AG04450 (cell line): ENCODE measurements at regions of chr10 and their contacts with region 1.

Region 1: DNA sequence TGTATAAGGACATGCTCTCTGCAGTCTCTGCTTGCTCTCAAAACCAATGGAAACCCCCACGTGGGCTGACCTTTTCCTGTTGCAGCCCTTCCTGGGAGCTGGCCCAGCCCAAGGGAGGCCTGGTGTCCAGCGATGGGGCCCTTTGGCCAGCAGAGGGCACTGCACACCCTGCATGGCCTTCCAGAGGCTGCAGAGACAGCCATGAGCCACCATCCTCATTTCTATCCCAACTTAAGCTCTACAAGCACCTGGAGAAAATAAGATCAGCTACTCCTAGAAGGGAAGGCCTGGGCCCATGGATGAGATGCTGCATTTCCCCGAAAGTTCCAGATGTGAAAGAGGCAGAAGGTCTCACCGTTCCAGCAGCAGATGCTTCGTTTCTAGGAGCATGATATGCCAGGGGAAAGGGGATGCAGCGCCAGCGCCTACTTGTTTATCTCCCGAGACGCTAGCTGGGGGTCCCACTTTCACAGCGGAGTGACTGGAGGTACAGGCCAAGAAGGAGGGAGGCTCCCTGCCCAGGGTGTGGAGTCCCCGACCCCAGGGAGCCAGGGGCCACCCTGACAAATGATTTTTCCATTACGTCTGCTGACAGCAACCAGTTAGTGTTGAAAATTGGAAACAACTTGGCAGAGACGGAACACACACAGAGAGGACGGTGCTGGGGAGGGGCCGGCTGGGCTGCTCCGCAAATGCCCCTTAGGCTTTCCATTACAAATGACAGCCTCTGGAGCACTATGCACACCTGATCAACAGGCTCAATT is 106.4 kb downstream of the ZRANB1 start:
- DNase-seq: peak; percentile 76
- H3K4me3 ChIP-seq: no peak overlapping the region
- H3K27ac ChIP-seq: peak overlapping the region; percentile 52
- H3K27me3 ChIP-seq: no peaks in the 10 kb centered on the region
- CTCF ChIP-seq: peak; percentile 99

Region 2: DNA sequence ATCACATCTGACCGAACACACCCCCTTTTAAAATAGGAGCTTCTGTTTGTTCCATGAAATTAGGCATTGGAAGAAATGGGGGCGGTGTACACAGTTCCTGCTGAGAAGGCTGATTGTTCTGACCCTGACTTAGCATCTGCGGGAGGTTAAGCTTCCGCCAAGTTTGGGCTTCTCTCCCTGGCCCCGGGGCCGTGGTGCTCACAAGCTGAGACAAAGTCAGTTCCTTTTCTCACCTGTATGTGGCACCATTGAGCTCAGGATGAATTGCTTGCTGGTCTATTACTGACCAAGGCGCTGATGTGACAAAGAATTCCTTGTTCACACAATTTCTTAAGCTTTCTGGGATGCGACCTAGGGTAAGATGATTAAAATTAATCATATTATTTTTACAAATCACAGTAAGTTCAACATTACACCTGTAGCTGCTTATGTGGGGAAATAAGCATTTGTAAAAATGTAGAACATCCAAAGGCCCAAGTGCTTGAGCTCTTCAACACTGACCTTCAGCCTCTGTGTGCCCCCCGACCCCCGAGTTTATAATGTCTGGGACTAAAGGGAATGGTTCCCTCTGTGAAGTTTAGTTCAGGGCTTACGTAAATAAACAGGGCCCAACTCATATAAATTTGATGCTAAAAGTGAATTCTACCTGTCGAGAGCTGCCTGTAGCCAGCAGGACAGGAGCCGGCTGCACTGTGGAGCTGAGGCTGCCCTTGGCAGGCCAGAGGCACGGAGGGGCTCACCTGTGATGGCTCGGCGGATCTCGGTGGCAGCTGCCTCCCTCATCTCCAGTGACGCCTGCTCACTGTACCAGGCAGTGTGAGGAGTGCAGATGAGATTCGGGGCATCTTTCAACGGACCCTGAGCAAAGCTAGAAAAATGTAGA is 55.6 kb before region 1 on chr10:
- CTCF ChIA-PET with region 1: interaction called, 12 read pairs
- POLR2A ChIA-PET with region 1: no interaction called
- DNase-seq: peak; percentile 15
- H3K4me3 ChIP-seq: no peak overlapping the region
- H3K27ac ChIP-seq: no peak overlapping the region
- H3K27me3 ChIP-seq: no peaks in the 10 kb centered on the region
- CTCF ChIP-seq: peak; percentile 62

Region 3: GRCh38 chr10:125006921-125007426 is 41.3 kb before region 1 on chr10:
- CTCF ChIA-PET with region 1: interaction called, 28 read pairs
- POLR2A ChIA-PET with region 1: no interaction called
- DNase-seq: no peak
- H3K4me3 ChIP-seq: no peak overlapping the region
- H3K27ac ChIP-seq: no peak overlapping the region
- H3K27me3 ChIP-seq: no peaks in the 10 kb centered on the region
- CTCF ChIP-seq: no peak

Region 4: GRCh38 chr10:125060826-125061556 is 12.7 kb after region 1 on chr10:
- CTCF ChIA-PET with region 1: interaction called, 86 read pairs
- POLR2A ChIA-PET with region 1: no interaction called
- DNase-seq: peak; percentile 56
- H3K4me3 ChIP-seq: no peak overlapping the region
- H3K27ac ChIP-seq: peak overlapping the region; percentile 70
- H3K27me3 ChIP-seq: no peaks in the 10 kb centered on the region
- CTCF ChIP-seq: peak; percentile 81

Region 5: GRCh38 chr10:125144693-125145623 is 96.7 kb after region 1 on chr10:
- CTCF ChIA-PET with region 1: interaction called, 11 read pairs
- POLR2A ChIA-PET with region 1: interaction called, 3 read pairs
- DNase-seq: no peak
- H3K4me3 ChIP-seq: no peak overlapping the region
- H3K27ac ChIP-seq: peak overlapping the region; percentile 21
- H3K27me3 ChIP-seq: no peaks in the 10 kb centered on the region
- CTCF ChIP-seq: peak; percentile 62

Region 6: DNA sequence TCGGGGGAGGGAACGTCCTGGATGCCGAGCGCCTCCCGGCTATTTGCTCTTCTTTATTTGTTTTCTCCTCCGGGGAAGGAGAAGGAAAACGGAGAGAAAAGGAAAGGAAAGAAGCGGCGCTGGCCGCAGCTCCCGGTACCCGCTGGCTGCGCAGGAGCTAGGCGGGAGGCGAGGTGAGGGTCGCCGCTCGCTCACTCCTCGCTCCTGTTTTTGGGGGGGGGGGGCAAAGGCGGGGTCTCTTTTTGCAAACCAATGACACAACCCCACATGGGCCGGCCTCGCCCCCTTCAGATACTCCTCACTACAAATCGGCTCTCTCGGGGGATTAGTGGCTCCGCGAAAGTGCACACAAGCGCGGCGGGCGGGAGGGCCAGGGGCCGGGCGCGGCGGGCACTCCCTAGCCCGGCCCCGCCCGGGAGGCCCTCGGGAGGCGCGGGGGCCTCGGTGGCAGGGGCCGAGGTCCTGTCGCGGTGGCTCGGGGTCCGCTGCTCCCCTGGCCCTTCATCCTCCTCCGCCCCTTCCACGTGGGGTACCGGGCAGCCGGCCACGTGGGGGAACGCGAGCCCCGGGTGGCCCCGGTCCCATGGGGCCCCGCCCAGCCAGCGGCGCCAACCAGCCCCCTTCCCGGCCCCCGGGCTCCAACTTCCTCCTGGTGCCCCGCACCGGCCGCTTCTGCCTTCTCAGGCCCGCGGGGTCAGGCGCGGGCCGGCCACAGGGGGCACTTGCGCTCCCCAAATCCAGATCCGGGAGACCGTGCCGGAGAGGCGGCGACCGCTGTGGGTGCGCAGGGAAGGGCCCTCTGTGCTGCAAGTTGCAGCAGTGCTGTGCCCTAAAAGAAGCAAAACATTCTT is 112.8 kb after region 1 on chr10:
- CTCF ChIA-PET with region 1: interaction called, 19 read pairs
- POLR2A ChIA-PET with region 1: no interaction called
- DNase-seq: peak; percentile 50
- H3K4me3 ChIP-seq: peak overlapping the region; percentile 71
- H3K27ac ChIP-seq: peak overlapping the region; percentile 83
- H3K27me3 ChIP-seq: no peaks in the 10 kb centered on the region
- CTCF ChIP-seq: peak; percentile 50